Astrocyte of the cerebellum (primary cell): ENCODE measurements at regions of chr2 and their contacts with region 1.

Region 1: DNA sequence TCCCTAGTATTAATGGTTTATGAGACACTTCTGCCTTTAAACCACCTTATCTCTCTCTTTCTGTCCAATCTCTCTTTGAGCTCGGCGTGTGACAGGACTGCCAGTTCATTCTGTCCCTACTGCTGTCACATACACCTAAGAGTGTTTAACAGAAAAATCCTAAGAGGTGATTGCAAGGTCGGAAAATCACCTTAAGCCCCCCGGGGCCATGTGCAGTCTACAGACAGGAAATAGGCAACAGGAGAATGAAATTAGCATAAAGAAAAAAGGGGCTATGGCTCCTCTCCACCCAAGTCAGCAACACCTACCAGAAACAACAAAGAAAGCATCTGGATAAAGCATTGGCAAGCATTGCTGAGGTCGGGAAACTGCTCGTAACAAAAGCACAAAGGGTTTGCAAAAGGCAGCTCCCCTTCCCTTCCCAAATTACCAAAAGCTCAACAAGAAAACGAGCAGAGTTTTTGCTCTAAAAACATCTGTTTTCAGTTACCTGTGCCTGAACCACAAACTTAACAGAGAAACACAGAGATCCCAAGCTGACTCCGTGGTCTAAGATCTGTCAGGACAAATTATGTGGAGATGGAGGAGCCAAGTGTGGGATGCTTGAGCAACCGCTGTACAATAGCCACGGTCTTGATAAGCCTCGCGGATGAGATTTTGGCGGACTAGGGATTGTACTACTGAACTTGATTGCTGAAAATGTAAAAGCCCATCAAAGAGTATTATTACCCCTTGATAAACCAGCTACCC is 30.4 kb downstream of the ANKRD44 start:
- DNase-seq: peak; percentile 82
- H3K4me3 ChIP-seq: no peak overlapping the region
- CTCF ChIP-seq: no peak

Region 2: GRCh38 chr2:197184959-197185586 is 95.1 kb before region 1 on chr2:
- in situ Hi-C with region 1: no loop called
- DNase-seq: peak; percentile 73
- H3K4me3 ChIP-seq: no peak overlapping the region
- CTCF ChIP-seq: no peak

Region 3: GRCh38 chr2:197209742-197210408 is 70.3 kb before region 1 on chr2:
- in situ Hi-C with region 1: loop called (anchors 5 kb)
- DNase-seq: no peak
- H3K4me3 ChIP-seq: no peak overlapping the region
- CTCF ChIP-seq: no peak

Region 4: DNA sequence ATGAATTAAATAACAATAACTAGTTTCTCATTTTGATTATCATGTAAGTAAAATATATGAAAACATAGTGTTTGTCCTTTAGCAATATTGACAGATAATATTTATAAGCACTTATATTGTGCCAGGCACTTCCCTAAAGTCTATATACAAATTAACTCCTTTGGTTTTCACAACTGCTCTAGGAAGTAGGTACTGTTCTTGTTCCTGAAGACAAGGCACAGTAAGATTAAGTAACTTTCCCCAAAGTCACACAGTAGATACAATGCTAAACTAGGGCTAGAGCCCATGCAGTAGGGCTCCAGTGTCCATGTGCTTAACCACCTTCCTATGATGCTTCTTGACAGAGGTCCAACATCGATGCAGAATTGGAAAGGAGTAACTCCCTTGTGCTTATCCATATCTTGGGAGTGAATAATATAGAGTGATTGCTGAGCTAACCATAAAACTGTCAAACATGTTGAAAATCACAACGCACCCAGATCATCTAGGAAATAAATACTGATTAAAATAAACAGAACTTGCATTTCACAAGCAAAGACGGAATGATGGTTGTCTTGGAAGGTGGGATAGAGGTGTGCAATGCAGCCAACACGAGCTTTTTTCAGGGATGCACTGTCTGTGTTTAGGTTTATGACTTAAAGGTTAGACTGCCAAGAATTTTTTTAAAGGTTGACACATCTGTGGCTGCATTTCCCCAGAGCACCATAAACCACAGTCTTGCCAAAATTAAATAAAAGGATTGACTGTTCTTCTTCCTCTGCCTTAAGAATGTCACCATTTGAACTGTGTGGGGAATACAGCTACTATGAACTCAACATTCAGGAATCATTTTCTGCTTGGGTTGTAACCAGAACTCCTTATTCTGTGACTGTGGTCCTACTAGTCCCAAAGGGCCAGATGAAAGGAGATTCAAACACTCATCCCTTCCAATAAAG is 50.4 kb before region 1 on chr2:
- in situ Hi-C with region 1: no loop called
- DNase-seq: peak; percentile 32
- H3K4me3 ChIP-seq: no peak overlapping the region
- CTCF ChIP-seq: no peak

Region 5: DNA sequence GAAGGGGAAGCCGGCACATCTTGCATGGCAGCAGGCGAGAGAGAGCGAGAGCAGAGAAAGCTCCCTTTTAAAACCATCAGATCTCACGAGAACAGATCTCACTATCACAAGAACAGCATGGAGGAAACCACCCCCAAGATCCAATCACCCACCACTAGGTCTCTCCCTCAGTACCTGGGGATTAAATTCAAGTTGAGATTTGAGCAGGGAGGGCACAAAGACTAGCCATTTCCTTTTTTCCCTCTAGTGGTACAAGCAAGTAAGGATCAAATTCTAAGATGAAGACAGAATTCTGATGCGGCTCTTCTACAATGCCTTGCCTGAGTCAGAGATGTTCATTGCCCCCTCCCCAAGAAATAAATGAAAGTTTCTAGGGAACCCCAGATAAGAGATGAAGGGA is 76.0 kb after region 1 on chr2:
- in situ Hi-C with region 1: loop called (anchors 5 kb)
- DNase-seq: no peak
- H3K4me3 ChIP-seq: no peak overlapping the region
- CTCF ChIP-seq: peak; percentile 51